ENCODE measurements at regions of chr17 and their contacts with region 1.

Region 1: DNA sequence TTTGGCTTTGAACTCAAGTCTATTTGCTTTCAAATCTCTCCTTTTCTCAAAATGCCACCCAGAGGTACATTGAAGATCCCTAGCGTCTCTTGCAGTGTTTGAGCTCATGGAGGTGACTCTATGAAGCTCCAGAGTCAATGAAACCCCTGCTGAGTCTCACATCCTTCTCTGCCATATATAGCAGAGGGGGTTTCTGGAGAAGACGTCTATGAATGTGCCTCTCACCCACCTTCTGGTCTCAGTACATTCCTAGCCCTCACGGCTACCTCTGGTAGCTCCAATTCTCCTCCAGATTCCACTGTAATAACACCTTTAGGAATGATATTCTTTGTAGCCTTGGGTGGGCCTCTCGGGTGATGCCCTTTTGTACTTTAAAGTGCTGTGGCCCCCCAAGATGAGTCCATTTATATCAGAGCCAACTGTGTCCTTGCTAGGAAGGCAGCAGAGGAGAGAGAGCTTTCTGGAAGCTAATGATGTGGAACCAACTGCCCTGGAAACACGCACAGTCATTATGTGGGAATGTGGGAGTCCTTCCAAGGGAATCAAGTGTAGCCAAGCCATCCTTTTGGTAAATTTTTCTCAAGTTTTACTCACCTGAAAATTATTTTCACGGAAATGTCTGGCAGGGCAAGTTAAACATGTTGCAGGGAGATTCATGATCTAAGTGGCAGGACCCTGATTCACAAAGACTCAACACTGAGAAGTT is 123.4 kb downstream of the ASIC2 start:
- DNase-seq: no peak
- H3K4me3 ChIP-seq: no peak overlapping the region
- H3K27ac ChIP-seq: no peak overlapping the region
- H3K4me1 ChIP-seq: no peaks in the 10 kb centered on the region
- H3K27me3 ChIP-seq: peaks cover 21% of the 10 kb centered on the region; the same call in 1 of the 2 replicates
- CTCF ChIP-seq: no peak

Region 2: DNA sequence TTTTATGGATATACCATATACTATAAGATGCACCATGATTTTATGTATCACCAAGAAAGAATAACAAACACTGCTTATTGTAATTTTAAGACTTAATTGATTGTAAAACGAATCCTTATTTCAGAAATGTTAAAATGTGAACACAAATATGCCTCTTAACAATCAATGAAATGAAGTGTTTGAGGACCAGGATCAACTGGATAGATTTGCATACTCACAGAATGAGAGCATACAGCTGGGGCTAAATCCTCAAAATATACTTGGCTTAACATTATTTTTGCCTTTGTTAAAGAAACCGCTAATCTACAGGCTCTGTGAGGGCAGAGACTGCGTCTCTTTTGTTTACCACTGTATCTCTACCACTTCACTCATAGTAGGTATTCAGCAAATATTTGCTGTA is 84.5 kb before region 1 on chr17:
- CTCF ChIA-PET with region 1: no interaction called
- POLR2A ChIA-PET with region 1: interaction called, 10 read pairs
- intact Hi-C with region 1: no loop called
- DNase-seq: no peak
- H3K4me3 ChIP-seq: no peak overlapping the region
- H3K27ac ChIP-seq: no peak overlapping the region
- H3K4me1 ChIP-seq: no peaks in the 10 kb centered on the region
- H3K27me3 ChIP-seq: peaks cover 15% of the 10 kb centered on the region
- CTCF ChIP-seq: no peak

Region 3: DNA sequence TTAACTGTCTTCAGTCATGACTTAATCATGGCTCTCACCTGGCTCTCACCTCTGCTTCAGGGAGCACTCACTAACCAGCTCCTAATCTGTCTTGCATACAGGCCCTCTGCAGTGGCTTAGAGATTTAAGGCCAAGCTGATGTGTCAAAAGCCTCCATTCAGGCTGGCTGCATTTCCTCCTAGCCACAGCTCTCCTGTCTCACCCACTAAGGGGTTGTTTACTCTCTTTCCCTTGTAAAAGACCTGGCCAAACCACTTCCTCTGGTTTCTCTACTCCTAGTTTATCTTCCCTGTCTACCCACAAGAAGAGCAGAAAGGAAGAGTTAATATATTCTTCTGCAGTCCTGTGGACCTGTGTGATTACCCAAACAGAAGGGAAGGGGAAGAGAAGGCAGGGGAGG is 132.7 kb after region 1 on chr17:
- CTCF ChIA-PET with region 1: no interaction called
- POLR2A ChIA-PET with region 1: no interaction called
- intact Hi-C with region 1: loop called (anchors 10 kb)
- DNase-seq: no peak
- H3K4me3 ChIP-seq: no peak overlapping the region
- H3K27ac ChIP-seq: no peak overlapping the region
- H3K4me1 ChIP-seq: no peaks in the 10 kb centered on the region
- H3K27me3 ChIP-seq: peaks cover 11% of the 10 kb centered on the region
- CTCF ChIP-seq: no peak

Region 4: GRCh38 chr17:33328129-33328528 is 158.4 kb after region 1 on chr17:
- CTCF ChIA-PET with region 1: no interaction called
- POLR2A ChIA-PET with region 1: no interaction called
- intact Hi-C with region 1: no loop called
- DNase-seq: peak in 1 of 2 experiments; percentile 3
- H3K4me3 ChIP-seq: no peak overlapping the region
- H3K27ac ChIP-seq: no peak overlapping the region
- H3K4me1 ChIP-seq: no peaks in the 10 kb centered on the region
- H3K27me3 ChIP-seq: no peaks in the 10 kb centered on the region
- CTCF ChIP-seq: no peak

Measured in PC-9 (cell line).